GM10248 (cell line): ENCODE measurements at regions of chr12 and their contacts with region 1.

Region 1: DNA sequence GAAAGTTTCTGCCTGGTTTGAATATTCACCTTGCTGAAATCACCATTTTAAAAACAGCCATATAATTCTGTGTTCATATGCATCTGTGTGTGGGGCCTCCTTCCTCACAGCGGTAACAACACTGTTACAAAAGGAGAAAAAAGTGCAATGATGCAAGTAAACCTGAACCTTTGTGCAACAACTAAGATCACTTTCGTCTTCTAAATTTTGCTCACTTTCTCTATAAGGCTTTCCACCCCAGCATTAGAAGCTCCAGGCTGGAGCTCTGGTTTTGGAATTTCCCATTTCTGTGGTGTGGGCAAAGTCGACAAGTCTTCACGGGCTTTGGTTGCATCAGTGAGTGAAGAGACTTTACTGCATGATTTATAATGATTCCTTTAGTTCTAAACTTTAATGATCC is 18.4 kb downstream of the FGD6 start:
- DNase-seq: peak; percentile 43
- CTCF ChIP-seq: no peak

Region 2: DNA sequence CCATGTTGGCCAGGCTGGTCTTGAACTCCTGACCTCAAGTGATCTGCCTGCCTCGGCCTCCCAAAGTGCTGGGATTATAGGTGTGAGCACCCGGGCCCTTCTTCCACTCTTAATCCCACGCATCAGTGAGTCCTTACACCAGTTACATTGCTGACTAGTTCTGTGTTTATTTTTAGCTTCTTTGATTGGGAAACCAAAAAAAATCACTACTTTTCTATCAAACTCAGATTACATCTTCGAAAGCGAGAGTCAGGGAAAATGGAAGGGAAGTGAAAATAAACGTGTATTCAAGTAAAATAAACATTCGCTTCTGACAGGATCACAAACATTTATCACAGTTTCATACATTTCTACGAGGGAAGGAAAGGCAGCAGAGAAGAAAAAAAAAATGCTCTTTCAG is 13.8 kb before region 1 on chr12:
- CTCF ChIA-PET with region 1: interaction called, 22 read pairs
- POLR2A ChIA-PET with region 1: no interaction called
- DNase-seq: no peak
- CTCF ChIP-seq: no peak

Region 3: DNA sequence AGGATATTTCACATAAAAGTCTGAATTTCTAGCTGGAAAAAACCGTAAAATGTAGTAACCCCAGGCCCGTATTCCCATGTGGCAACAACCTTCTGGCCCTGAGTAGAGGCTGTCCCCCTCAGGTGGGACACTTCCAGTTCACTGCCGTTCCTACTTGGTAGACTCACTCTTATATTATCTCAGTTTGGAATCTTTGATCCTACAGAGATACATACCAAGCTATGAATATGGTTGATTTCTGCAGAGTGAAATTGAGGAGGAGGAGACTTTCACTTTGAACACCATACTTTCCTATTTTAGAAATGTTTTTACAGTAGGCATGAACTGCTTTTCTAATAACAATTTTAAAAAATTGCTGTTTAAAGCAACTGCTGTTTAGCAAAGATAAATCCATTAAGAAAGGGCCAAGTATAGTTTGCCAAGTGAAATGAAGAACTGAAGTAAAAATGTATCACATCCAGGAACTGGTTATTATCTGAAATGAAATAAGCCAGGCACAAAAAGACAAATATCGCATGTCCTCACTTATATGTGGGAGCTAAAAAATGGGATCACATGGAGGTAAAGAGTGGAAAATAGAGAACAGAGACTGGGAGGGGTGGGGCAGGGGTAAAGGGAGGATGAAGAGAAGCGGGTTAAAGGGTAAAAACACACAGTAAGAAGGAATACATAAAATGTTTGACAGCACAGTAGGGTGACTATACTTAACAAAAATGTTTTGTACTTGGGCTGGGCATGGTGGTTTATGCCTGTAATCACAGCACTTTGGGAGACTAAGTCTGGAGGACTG is 182.3 kb after region 1 on chr12:
- CTCF ChIA-PET with region 1: no interaction called
- POLR2A ChIA-PET with region 1: no interaction called
- DNase-seq: no peak
- CTCF ChIP-seq: no peak